ENCODE measurements at regions of chrX and their contacts with region 1.

Region 1: DNA sequence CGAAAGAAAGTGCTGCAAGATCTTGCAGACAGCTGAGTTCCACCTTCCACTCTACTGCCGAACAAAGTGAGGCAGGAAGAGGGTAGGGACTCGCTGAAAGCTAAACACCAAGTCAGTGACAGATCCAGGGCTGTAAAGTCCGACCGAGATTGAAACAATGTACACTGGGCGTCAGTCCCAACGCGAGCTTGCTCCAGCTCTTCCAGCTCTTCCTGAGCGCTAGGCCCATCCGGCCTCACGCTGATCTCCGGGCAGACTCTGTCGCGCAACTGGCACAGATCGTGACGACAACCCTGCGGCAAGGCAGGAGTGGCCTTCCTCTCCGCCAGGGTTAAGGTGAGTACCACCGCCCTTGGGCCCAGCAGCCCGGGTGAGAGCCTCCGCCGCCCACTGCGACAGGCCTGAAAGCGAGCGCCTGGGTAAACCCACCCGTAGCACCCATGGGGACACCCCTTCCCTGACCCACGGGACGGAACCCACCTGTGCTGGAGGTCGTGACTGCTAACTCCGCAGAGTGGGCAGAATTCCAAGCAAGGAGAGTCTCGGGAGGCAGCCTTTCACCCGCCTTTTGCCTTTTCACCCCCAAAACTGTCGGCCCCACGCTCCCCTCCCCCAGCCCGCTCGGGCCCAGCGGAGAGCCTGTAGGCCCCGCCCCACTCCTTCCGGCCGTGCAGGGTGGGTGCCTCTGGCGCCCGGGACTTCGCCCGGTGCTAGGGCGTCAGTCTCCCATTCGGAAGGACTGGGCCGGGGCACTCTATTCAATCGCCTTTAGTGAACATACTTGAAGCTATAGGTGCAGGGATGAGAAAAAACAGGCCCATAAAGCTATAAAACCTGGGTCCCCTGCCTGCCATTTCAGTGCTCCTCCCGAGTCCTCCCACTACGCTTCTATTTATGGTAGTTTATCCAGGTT is at the start of gene TMLHE:
- DNase-seq: peak; percentile 75
- H3K4me3 ChIP-seq: peak within 1 kb of the TSS; percentile 40 to 93 (median 78)
- H3K27ac ChIP-seq: peak within 1 kb of the TSS; percentile 62
- H3K4me1 ChIP-seq: no peaks in the 10 kb centered on the region
- H3K27me3 ChIP-seq: no peaks in the 10 kb centered on the region
- CTCF ChIP-seq: no peak
- POLR2A ChIP-seq: peak; percentile 30
- total RNA-seq, gene TMLHE: 10.2 and 12.1 TPM in 2 replicates

Region 2: GRCh38 chrX:155745792-155746191 is 133.2 kb after region 1 on chrX:
- CTCF ChIA-PET with region 1: no interaction called
- POLR2A ChIA-PET with region 1: no interaction called
- dilution Hi-C with region 1: no loop called
- intact Hi-C with region 1: loop called (anchors 1 kb)
- DNase-seq: peak; percentile 41
- H3K4me3 ChIP-seq: no peak overlapping the region
- H3K27ac ChIP-seq: no peak overlapping the region
- H3K4me1 ChIP-seq: no peaks in the 10 kb centered on the region
- H3K27me3 ChIP-seq: no peaks in the 10 kb centered on the region
- CTCF ChIP-seq: no peak
- POLR2A ChIP-seq: no peak

Measured in endothelial cell of umbilical vein (primary cell).